CD4-positive, alpha-beta memory T cell (primary cell): ENCODE measurements at regions of chr18 and their contacts with region 1.

Region 1: GRCh38 chr18:9614401-9615279 is at the start of gene PPP4R1:
- DNase-seq: peak; percentile 58 to 78 (median 64)
- H3K4me3 ChIP-seq: peak within 1 kb of the TSS; percentile 66 to 90
- H3K4me3 Mint-ChIP-seq: peak within 1 kb of the TSS; percentile 93 to 99 (median 96)
- H3K27ac ChIP-seq: peak within 1 kb of the TSS; percentile 64
- H3K27ac Mint-ChIP-seq: peak within 1 kb of the TSS; percentile 93 to 96 (median 95)
- H3K4me1 ChIP-seq: peaks cover 40% of the 10 kb centered on the region
- H3K4me1 Mint-ChIP-seq: peaks cover 29 to 54% (median 37%) of the 10 kb centered on the region in 4 donors
- H3K27me3 ChIP-seq: no peaks in the 10 kb centered on the region
- H3K27me3 Mint-ChIP-seq: no peaks in the 10 kb centered on the region
- total RNA-seq, gene PPP4R1: 64.0 to 71.0 TPM

Region 2: GRCh38 chr18:8608795-8609658 is 1005.6 kb before region 1 on chr18 and contains the start of gene RAB12:
- CTCF ChIA-PET with region 1: no interaction called
- POLR2A ChIA-PET with region 1: no interaction called
- intact Hi-C with region 1: loop called (anchors 2 kb)
- DNase-seq: peak; percentile 84 to 87 (median 85)
- H3K4me3 ChIP-seq: peak within 1 kb of the TSS; percentile 83 to 89
- H3K4me3 Mint-ChIP-seq: peak within 1 kb of the TSS; percentile 90 to 96 (median 92)
- H3K27ac ChIP-seq: peak within 1 kb of the TSS; percentile 71
- H3K27ac Mint-ChIP-seq: peak within 1 kb of the TSS; percentile 84 to 96 (median 93)
- H3K4me1 ChIP-seq: peaks cover 45% of the 10 kb centered on the region
- H3K4me1 Mint-ChIP-seq: peaks cover 33 to 54% (median 44%) of the 10 kb centered on the region in 4 donors
- H3K27me3 ChIP-seq: peaks cover 1% of the 10 kb centered on the region
- H3K27me3 Mint-ChIP-seq: peaks cover 3 to 4% of the 10 kb centered on the region in 2 donors
- total RNA-seq, gene RAB12: 20.7 to 20.8 TPM

Region 3: GRCh38 chr18:9136315-9137155 is 478.1 kb before region 1 on chr18 and contains the start of gene ANKRD12:
- CTCF ChIA-PET with region 1: no interaction called
- POLR2A ChIA-PET with region 1: no interaction called
- intact Hi-C with region 1: loop called (anchors 2 kb)
- DNase-seq: peak; percentile 97 to 99 (median 98)
- H3K4me3 ChIP-seq: peak within 1 kb of the TSS; percentile 52 to 88
- H3K4me3 Mint-ChIP-seq: peak within 1 kb of the TSS; percentile 97 to 99 (median 98)
- H3K27ac ChIP-seq: peak within 1 kb of the TSS; percentile 90
- H3K27ac Mint-ChIP-seq: peak within 1 kb of the TSS; percentile 99 to 100 (median 99)
- H3K4me1 ChIP-seq: peaks cover 72% of the 10 kb centered on the region
- H3K4me1 Mint-ChIP-seq: peaks cover 43 to 85% (median 57%) of the 10 kb centered on the region in 4 donors
- H3K27me3 ChIP-seq: no peaks in the 10 kb centered on the region
- H3K27me3 Mint-ChIP-seq: peaks cover 0 to 2% of the 10 kb centered on the region in 2 donors
- total RNA-seq, gene ANKRD12: 262 to 280 TPM

Region 4: GRCh38 chr18:9474983-9475642 is 139.5 kb before region 1 on chr18 and contains the start of gene RALBP1:
- CTCF ChIA-PET with region 1: no interaction called
- POLR2A ChIA-PET with region 1: interaction called, 3 read pairs
- intact Hi-C with region 1: loop called (anchors 2 kb)
- DNase-seq: peak; percentile 96 to 98 (median 97)
- H3K4me3 ChIP-seq: peak within 1 kb of the TSS; percentile 86
- H3K4me3 Mint-ChIP-seq: peak within 1 kb of the TSS; percentile 94 to 99 (median 98)
- H3K27ac ChIP-seq: peak within 1 kb of the TSS; percentile 79
- H3K27ac Mint-ChIP-seq: peak within 1 kb of the TSS; percentile 95 to 98 (median 96)
- H3K4me1 ChIP-seq: peaks cover 24% of the 10 kb centered on the region
- H3K4me1 Mint-ChIP-seq: peaks cover 25 to 46% (median 33%) of the 10 kb centered on the region in 4 donors
- H3K27me3 ChIP-seq: no peaks in the 10 kb centered on the region
- H3K27me3 Mint-ChIP-seq: peaks cover 3 to 5% of the 10 kb centered on the region in 2 donors
- total RNA-seq, gene RALBP1: 44.9 to 49.9 TPM

Region 5: DNA sequence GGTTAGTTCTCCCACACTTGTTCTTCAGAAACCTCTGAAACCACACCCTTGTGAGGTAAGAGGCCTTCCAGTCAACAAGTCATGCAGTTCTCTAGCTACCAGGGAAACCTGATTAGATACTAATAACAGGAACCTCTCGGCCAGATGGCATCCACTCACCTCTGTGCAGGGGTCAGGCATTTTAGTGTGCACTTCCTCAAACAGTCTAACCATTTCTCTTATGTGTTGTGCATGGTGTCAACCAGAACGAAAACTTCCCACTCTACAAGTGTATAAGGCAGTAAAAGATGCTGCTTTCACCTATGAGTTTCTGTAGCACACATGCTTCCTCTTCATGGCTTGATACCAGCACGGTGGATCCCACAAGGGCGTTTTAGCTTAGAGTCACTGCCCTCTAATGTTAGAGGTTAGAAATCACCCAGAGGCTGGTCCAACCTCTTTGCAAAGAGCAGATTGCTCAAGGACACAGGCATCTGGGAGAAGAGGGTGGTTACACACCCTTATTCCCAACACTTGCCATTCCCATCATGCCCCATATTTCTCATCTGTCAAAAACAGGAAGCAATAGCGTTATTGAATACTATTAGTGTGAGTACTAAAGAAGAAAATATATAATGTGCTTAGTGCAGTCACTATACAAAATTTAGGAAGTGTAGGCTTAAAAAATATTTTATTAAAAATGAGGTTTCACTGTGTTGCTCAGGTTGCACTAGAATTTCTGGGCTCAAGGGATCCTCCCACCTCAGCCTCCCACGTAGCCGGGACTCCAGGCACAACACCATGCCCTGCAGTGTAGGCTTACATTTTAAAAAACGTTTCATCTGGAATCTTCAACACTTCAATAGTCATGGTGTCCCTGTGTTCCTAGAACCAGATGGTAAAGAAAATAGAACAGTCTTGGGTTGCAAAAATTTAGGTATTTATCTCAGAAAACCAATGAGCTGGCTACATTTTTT is 58.9 kb after region 1 on chr18:
- CTCF ChIA-PET with region 1: interaction called, 8 read pairs
- POLR2A ChIA-PET with region 1: interaction called, 3 read pairs
- intact Hi-C with region 1: loop called (anchors 1 kb)
- DNase-seq: peak; percentile 27 to 48 (median 31)
- H3K4me3 ChIP-seq: no peak overlapping the region
- H3K4me3 Mint-ChIP-seq: peak overlapping the region in 1 of 8 donors; percentile 21
- H3K27ac ChIP-seq: no peak overlapping the region
- H3K27ac Mint-ChIP-seq: peak overlapping the region in 3 of 7 donors; percentile 75 to 84 (median 81)
- H3K4me1 ChIP-seq: peaks cover 3% of the 10 kb centered on the region
- H3K4me1 Mint-ChIP-seq: peaks cover 4 to 6% (median 5%) of the 10 kb centered on the region in 4 donors
- H3K27me3 ChIP-seq: no peaks in the 10 kb centered on the region
- H3K27me3 Mint-ChIP-seq: peaks cover 6 to 12% of the 10 kb centered on the region in 2 donors

Region 6: DNA sequence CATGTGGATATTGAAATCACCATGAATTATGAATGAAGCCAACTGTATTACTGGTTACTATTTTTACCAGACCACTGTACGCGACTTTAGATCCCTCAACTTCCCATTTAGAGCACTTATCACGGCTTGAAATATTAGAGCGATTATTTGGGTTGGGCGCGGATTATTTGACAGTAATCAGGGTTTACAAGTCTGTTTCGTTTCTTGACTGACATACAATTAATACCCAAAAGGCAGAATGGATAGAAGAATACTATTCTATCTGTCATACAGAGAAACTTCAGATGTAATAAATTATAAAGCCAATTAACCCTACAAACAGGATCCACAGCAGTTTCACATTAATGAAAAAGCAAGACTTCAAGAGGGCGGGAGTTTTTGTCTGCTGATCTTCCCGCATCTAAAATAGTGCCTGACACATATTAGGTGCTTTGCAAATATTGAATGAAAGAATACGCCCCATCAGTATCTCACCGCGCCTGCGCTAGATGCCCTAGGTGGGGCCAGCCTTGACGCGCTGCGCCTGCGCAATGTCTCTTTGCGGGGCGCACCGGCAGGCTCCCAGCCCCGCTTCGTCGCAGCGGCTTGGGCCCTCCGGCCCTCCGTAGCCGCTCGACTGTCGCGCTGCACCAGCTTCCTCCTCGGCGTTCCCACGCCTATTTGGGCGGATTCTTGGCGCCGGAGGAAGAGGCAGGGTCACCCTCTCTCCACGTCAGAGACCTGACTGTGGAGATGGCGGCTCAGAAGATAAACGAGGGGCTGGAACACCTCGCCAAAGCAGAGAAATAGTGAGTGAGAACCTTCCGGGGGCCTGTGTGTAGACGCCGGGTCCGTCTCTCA is 911.0 kb after region 1 on chr18 and contains the start of gene NAPG:
- CTCF ChIA-PET with region 1: no interaction called
- POLR2A ChIA-PET with region 1: no interaction called
- intact Hi-C with region 1: loop called (anchors 2 kb)
- DNase-seq: peak; percentile 88 to 94 (median 93)
- H3K4me3 ChIP-seq: peak within 1 kb of the TSS; percentile 89 to 91
- H3K4me3 Mint-ChIP-seq: peak within 1 kb of the TSS; percentile 95 to 99 (median 98)
- H3K27ac ChIP-seq: peak within 1 kb of the TSS; percentile 80
- H3K27ac Mint-ChIP-seq: peak within 1 kb of the TSS; percentile 92 to 99 (median 98)
- H3K4me1 ChIP-seq: peaks cover 51% of the 10 kb centered on the region
- H3K4me1 Mint-ChIP-seq: peaks cover 41 to 61% (median 51%) of the 10 kb centered on the region in 4 donors
- H3K27me3 ChIP-seq: no peaks in the 10 kb centered on the region
- H3K27me3 Mint-ChIP-seq: no peaks in the 10 kb centered on the region
- total RNA-seq, gene NAPG: 28.1 to 29.2 TPM